ENCODE measurements at regions of chr12 and their contacts with region 1.

Region 1: DNA sequence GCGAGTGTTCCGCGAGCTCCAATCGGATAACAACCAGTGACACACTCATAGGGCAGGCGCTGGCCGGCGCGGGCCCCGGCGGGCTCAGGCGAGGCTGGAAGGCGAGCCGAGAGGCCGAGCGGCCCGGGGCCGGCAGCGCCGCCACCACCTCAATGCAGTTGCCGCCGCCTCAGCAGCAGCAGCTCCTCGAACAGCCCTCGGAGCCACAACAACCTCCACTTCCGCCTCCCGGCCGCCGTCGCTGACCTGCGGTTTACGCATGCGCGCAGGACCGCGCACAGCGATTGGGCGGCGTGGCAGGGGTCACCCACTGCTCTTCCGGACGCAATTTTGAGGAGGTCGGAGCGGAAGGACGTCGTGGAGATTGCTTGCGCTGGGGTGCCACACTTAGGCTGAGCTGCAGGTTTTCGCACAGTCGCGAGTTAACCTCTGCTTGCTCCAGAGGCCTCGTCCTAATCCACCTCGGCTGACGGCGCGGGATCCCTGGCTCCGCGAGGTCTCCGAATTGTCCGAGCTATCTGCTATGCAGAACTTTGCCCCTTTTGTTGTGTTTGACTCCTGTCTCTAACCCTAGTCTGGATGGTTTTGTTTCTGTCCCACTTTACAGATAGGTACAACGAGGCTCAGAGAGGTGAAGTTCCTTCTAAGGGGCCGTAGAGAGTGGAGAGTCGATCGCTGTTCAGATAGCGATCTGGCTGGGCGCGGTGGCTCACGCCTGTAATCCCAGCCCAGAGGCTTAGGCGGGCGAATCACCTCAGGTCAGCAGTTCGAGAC is at the starts of genes ACAD10 and BRAP:
- DNase-seq: peak; percentile 86 to 97 (median 92)
- ATAC-seq: peak; percentile 83
- H3K4me3 ChIP-seq: peak within 1 kb of the TSS; percentile 92
- H3K4me3 Mint-ChIP-seq: peak within 1 kb of the TSS; percentile 95
- H3K27ac ChIP-seq: peak within 1 kb of the TSS; percentile 46 to 76
- H3K27ac Mint-ChIP-seq: peak within 1 kb of the TSS; percentile 86
- H3K4me1 ChIP-seq: peaks cover 27% of the 10 kb centered on the region
- H3K4me1 Mint-ChIP-seq: peaks cover 46% of the 10 kb centered on the region
- H3K27me3 ChIP-seq: no peaks in the 10 kb centered on the region
- H3K27me3 Mint-ChIP-seq: no peaks in the 10 kb centered on the region
- CTCF ChIP-seq: no peak
- total RNA-seq, gene ACAD10: 15.8 to 17.4 TPM
- total RNA-seq, gene BRAP: 22.4 to 25.8 TPM

Region 2: DNA sequence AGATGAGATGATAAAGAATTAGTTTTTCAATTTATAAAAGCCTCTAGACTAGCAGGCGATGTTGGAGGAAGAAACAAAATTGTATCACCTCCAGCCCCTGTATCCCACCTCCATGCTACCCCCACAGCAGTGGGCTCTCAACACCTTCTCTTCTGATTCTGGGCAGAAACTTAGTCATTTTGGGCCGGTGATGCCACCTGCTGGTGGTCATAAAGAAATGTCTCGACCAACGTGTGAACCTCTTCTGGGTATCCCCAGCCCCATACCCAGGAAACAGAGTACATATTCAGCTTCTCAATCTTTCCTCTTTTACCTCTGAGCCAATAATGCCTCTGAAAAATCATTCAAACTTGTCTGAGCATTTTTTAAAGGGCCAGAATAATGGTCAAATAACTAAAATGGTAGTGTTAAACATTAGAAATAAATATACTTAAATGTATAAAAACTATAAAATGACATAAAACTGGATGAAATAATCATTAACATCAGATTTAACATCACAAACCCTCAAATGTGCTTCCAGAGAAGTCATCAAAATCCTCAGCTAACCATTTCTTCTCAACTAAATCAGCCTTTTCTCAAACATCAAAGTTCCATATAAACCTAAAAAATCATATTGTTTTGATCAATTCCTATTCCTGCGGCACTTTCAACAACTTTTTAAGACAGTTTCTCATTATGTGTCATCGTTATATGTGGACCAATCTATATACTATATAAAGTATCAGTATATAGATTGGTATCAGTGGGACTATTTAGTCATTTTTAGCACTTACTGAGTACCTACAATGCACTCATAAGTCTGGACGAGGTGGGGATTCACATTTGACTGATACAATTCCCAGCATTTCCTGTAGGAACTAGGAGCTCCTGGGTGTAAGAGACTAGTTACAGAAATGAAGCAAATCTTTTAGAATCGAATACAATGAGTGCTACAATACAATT is 156.2 kb before region 1 on chr12:
- CTCF ChIA-PET with region 1: no interaction called
- POLR2A ChIA-PET with region 1: no interaction called
- intact Hi-C with region 1: loop called in 1 of 2 experiments (anchors 5 kb)
- DNase-seq: peak; percentile 32 to 82 (median 46)
- ATAC-seq: peak; percentile 61
- H3K4me3 ChIP-seq: no peak overlapping the region
- H3K4me3 Mint-ChIP-seq: no peak overlapping the region
- H3K27ac ChIP-seq: no peak overlapping the region
- H3K27ac Mint-ChIP-seq: no peak overlapping the region
- H3K4me1 ChIP-seq: no peaks in the 10 kb centered on the region
- H3K4me1 Mint-ChIP-seq: no peaks in the 10 kb centered on the region
- H3K27me3 ChIP-seq: no peaks in the 10 kb centered on the region
- H3K27me3 Mint-ChIP-seq: no peaks in the 10 kb centered on the region
- CTCF ChIP-seq: peak; percentile 89

Region 3: GRCh38 chr12:111578274-111578970 is 107.5 kb before region 1 on chr12:
- CTCF ChIA-PET with region 1: no interaction called
- POLR2A ChIA-PET with region 1: no interaction called
- intact Hi-C with region 1: no loop called
- DNase-seq: peak in 2 of 14 experiments; percentile 8 to 23
- ATAC-seq: no peak
- H3K4me3 ChIP-seq: no peak overlapping the region
- H3K4me3 Mint-ChIP-seq: no peak overlapping the region
- H3K27ac ChIP-seq: no peak overlapping the region
- H3K27ac Mint-ChIP-seq: no peak overlapping the region
- H3K4me1 ChIP-seq: peaks cover 3% of the 10 kb centered on the region
- H3K4me1 Mint-ChIP-seq: peaks cover 21% of the 10 kb centered on the region
- H3K27me3 ChIP-seq: no peaks in the 10 kb centered on the region
- H3K27me3 Mint-ChIP-seq: no peaks in the 10 kb centered on the region
- CTCF ChIP-seq: no peak

Region 4: GRCh38 chr12:111599459-111600204 is 86.3 kb before region 1 on chr12:
- CTCF ChIA-PET with region 1: no interaction called
- POLR2A ChIA-PET with region 1: interaction called, 3 read pairs
- intact Hi-C with region 1: loop called in 1 of 2 experiments (anchors 2 kb)
- DNase-seq: peak; percentile 70 to 92 (median 80)
- ATAC-seq: peak; percentile 69
- H3K4me3 ChIP-seq: peak overlapping the region; percentile 92
- H3K4me3 Mint-ChIP-seq: peak overlapping the region; percentile 94
- H3K27ac ChIP-seq: peak overlapping the region; percentile 83 to 88
- H3K27ac Mint-ChIP-seq: peak overlapping the region; percentile 88
- H3K4me1 ChIP-seq: peaks cover 19% of the 10 kb centered on the region
- H3K4me1 Mint-ChIP-seq: peaks cover 31% of the 10 kb centered on the region
- H3K27me3 ChIP-seq: no peaks in the 10 kb centered on the region
- H3K27me3 Mint-ChIP-seq: no peaks in the 10 kb centered on the region
- CTCF ChIP-seq: no peak

Region 5: GRCh38 chr12:111812881-111813741 is 127.2 kb after region 1 on chr12:
- CTCF ChIA-PET with region 1: no interaction called
- POLR2A ChIA-PET with region 1: interaction called, 6 read pairs
- intact Hi-C with region 1: loop called in 1 of 2 experiments (anchors 1 kb)
- DNase-seq: peak; percentile 32 to 85 (median 48)
- ATAC-seq: peak; percentile 100
- H3K4me3 ChIP-seq: no peak overlapping the region
- H3K4me3 Mint-ChIP-seq: no peak overlapping the region
- H3K27ac ChIP-seq: no peak overlapping the region
- H3K27ac Mint-ChIP-seq: no peak overlapping the region
- H3K4me1 ChIP-seq: peaks cover 6% of the 10 kb centered on the region
- H3K4me1 Mint-ChIP-seq: peaks cover 6% of the 10 kb centered on the region
- H3K27me3 ChIP-seq: no peaks in the 10 kb centered on the region
- H3K27me3 Mint-ChIP-seq: no peaks in the 10 kb centered on the region
- CTCF ChIP-seq: peak; percentile 90

Region 6: GRCh38 chr12:111841750-111842555 is 156.0 kb after region 1 on chr12 and contains the start of gene MAPKAPK5:
- CTCF ChIA-PET with region 1: no interaction called
- POLR2A ChIA-PET with region 1: interaction called, 11 read pairs
- intact Hi-C with region 1: loop called in 1 of 2 experiments (anchors 2 kb)
- DNase-seq: peak; percentile 93 to 99 (median 97)
- ATAC-seq: peak; percentile 83
- H3K4me3 ChIP-seq: peak within 1 kb of the TSS; percentile 100
- H3K4me3 Mint-ChIP-seq: peak within 1 kb of the TSS; percentile 99
- H3K27ac ChIP-seq: peak within 1 kb of the TSS; percentile 81 to 84
- H3K27ac Mint-ChIP-seq: peak within 1 kb of the TSS; percentile 98
- H3K4me1 ChIP-seq: peaks cover 43% of the 10 kb centered on the region
- H3K4me1 Mint-ChIP-seq: peaks cover 67% of the 10 kb centered on the region
- H3K27me3 ChIP-seq: no peaks in the 10 kb centered on the region
- H3K27me3 Mint-ChIP-seq: no peaks in the 10 kb centered on the region
- CTCF ChIP-seq: no peak
- total RNA-seq, gene MAPKAPK5: 62.2 to 63.6 TPM

Region 7: GRCh38 chr12:112418608-112419298 is 732.8 kb after region 1 on chr12 and contains the start of gene PTPN11:
- CTCF ChIA-PET with region 1: no interaction called
- POLR2A ChIA-PET with region 1: no interaction called
- intact Hi-C with region 1: loop called in 1 of 2 experiments (anchors 5 kb)
- DNase-seq: peak; percentile 77 to 95 (median 87)
- ATAC-seq: peak; percentile 84
- H3K4me3 ChIP-seq: peak within 1 kb of the TSS; percentile 79
- H3K4me3 Mint-ChIP-seq: peak within 1 kb of the TSS; percentile 97
- H3K27ac ChIP-seq: peak within 1 kb of the TSS; percentile 83 to 88
- H3K27ac Mint-ChIP-seq: peak within 1 kb of the TSS; percentile 99
- H3K4me1 ChIP-seq: peaks cover 36% of the 10 kb centered on the region
- H3K4me1 Mint-ChIP-seq: peaks cover 40% of the 10 kb centered on the region
- H3K27me3 ChIP-seq: no peaks in the 10 kb centered on the region
- H3K27me3 Mint-ChIP-seq: no peaks in the 10 kb centered on the region
- CTCF ChIP-seq: peak; percentile 10
- total RNA-seq, gene PTPN11: 44.6 to 46.4 TPM

Region 8: GRCh38 chr12:112777387-112778310 is 1091.7 kb after region 1 on chr12:
- CTCF ChIA-PET with region 1: no interaction called
- POLR2A ChIA-PET with region 1: no interaction called
- intact Hi-C with region 1: no loop called
- DNase-seq: no peak
- ATAC-seq: no peak
- H3K4me3 ChIP-seq: no peak overlapping the region
- H3K4me3 Mint-ChIP-seq: no peak overlapping the region
- H3K27ac ChIP-seq: no peak overlapping the region
- H3K27ac Mint-ChIP-seq: no peak overlapping the region
- H3K4me1 ChIP-seq: no peaks in the 10 kb centered on the region
- H3K4me1 Mint-ChIP-seq: no peaks in the 10 kb centered on the region
- H3K27me3 ChIP-seq: peaks cover 0 to 2% of the 10 kb centered on the region in 2 experiments
- H3K27me3 Mint-ChIP-seq: peaks cover 11% of the 10 kb centered on the region
- CTCF ChIP-seq: no peak

Measured in CD4-positive, alpha-beta T cell (primary cell).